ENCODE measurements at regions of chr2 and their contacts with region 1.

Region 1: GRCh38 chr2:179849719-179850118 is 11.7 kb downstream of the ZNF385B start:
- DNase-seq: no peak
- H3K4me3 ChIP-seq: no peak overlapping the region
- H3K27ac ChIP-seq: no peak overlapping the region
- H3K4me1 ChIP-seq: no peaks in the 10 kb centered on the region
- H3K27me3 ChIP-seq: peaks cover 23% of the 10 kb centered on the region
- CTCF ChIP-seq: no peak

Region 2: DNA sequence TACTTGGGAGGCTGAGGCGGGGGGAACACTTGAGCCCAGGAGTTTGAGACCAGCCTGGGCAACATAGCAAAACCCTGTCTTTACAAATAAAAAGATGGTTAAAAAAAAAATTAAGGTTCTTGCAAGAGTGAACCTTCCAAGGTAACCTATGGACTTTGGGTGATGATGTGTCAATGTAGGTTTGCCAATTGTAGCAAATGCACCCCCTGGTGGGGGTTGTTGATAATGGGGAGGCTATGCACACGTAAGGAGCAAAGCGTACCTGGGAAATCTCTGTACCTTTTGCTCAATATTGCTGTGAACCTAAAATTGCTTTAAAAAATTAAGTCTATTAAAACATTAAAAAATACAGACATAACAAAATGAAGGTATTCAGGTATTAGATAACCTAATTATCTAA is 86.9 kb after region 1 on chr2:
- CTCF ChIA-PET with region 1: no interaction called
- POLR2A ChIA-PET with region 1: no interaction called
- intact Hi-C with region 1: loop called (anchors 5 kb)
- DNase-seq: peak; percentile 35
- H3K4me3 ChIP-seq: no peak overlapping the region
- H3K27ac ChIP-seq: no peak overlapping the region
- H3K4me1 ChIP-seq: no peaks in the 10 kb centered on the region
- H3K27me3 ChIP-seq: no peaks in the 10 kb centered on the region
- CTCF ChIP-seq: peak; percentile 58

Measured in A673 (cell line).